Activated CD4-positive, alpha-beta T cell treated with anti-CD3 and anti-CD28 coated beads for 36 hours (primary cell): ENCODE measurements at regions of chr15 and their contacts with region 1.

Region 1: DNA sequence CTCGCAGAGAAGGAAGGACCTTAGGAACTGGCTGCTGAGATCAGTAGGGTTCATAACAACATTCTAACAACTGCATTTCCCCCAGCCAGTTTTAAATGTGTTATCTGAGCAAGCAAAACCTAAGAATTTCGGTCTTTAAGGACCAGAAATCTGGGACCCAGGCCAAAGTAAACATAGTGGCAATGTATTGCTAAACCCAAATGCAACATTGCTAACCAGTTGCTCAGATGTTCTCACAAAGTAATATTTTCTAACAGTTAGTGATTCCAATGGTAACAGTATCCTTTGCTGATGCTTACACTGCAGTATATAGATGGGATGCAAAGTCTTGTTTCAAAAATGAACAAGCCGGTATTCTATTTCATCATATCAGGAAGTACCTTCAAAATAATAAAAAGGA is 254.3 kb downstream of the RYR3 start:
- DNase-seq: no peak
- ATAC-seq: no peak
- H3K4me3 Mint-ChIP-seq: no peak overlapping the region
- H3K27ac Mint-ChIP-seq: no peak overlapping the region
- H3K4me1 Mint-ChIP-seq: no peaks in the 10 kb centered on the region
- H3K27me3 Mint-ChIP-seq: peaks cover 3% of the 10 kb centered on the region

Region 2: DNA sequence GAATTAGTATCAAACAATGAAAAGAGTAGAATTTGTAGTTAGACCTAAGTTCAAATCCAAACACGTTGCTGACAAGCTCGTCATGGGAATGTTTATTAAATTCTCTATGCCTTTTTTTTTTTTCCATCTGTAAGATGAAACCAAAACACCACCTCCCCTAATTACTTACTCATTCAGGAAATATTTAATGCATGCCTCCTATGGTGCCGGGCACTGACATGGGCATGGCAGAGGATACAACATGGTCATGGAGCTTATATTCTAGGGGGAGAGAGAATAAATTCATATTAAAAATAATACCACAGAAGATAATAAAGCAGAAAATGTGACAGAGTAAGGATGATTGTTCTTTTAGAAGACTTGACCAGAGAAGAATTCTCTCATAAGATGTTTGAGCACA is 38.6 kb before region 1 on chr15:
- CTCF ChIA-PET with region 1: no interaction called
- POLR2A ChIA-PET with region 1: no interaction called
- intact Hi-C with region 1: no loop called
- DNase-seq: no peak
- ATAC-seq: no peak
- H3K4me3 Mint-ChIP-seq: no peak overlapping the region
- H3K27ac Mint-ChIP-seq: no peak overlapping the region
- H3K4me1 Mint-ChIP-seq: no peaks in the 10 kb centered on the region
- H3K27me3 Mint-ChIP-seq: peaks cover 6% of the 10 kb centered on the region

Region 3: GRCh38 chr15:33545866-33546265 is 19.2 kb before region 1 on chr15:
- CTCF ChIA-PET with region 1: interaction called, 4 read pairs
- POLR2A ChIA-PET with region 1: no interaction called
- intact Hi-C with region 1: loop called in 1 of 2 experiments (anchors 2 kb)
- DNase-seq: no peak
- ATAC-seq: no peak
- H3K4me3 Mint-ChIP-seq: no peak overlapping the region
- H3K27ac Mint-ChIP-seq: no peak overlapping the region
- H3K4me1 Mint-ChIP-seq: no peaks in the 10 kb centered on the region
- H3K27me3 Mint-ChIP-seq: peaks cover 7% of the 10 kb centered on the region